ENCODE measurements at regions of chr11 and their contacts with region 1.

Region 1: DNA sequence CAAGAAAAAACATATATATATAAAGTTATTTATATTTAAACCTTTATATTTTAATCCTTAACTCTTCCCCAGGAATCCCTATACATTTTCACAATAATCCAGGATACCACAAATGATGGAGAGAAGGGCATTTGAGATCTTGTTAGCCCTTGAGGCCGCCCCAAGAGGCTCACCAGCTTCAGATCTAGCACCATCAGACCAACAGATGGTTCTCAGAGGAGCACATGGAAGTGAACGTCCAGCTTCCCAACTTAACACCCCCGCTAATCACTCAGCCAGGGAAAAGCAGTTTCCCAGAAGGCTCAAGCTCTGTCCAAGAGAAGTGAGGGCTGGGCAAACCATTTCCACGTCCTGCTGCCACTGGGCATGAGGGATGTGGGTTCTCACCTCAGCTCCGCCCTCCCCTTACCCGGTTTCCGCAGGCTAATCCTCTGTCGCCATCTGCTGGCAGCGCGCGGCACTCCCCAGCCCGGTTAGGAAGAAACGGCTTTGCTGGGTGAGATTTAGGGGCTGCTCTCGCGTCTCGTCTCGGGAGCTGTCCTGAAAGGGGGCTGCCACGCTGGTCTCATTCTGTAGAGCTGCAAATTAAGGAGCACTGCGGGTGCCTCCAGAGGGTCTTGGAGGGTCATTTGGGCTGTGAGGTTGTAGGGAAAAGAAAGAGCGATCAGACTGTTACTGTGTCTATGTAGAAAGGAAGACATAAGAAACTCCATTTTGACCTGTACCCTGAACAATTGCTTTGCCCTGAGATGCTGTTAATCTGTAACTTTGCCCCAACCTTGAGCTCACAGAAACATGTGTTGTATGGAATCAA is 6.8 kb upstream of the FAM111A start:
- DNase-seq: peak; percentile 49
- ATAC-seq: peak; percentile 100
- H3K4me3 ChIP-seq: 0 out of 4 replicates have a peak overlapping the region, but pooled peaks of 1 of the 2 experiments have one; percentile 17
- H3K27ac ChIP-seq: no peak overlapping the region
- H3K4me1 ChIP-seq: peaks cover 0 to 6% of the 10 kb centered on the region in 2 experiments; a peak in 2 of 4 replicates
- H3K27me3 ChIP-seq: no peaks in the 10 kb centered on the region
- CTCF ChIP-seq: peak; percentile 72 to 99 (median 99); a peak in 5 of 6 replicates
- POLR2A ChIP-seq: no peak
- RAD21 ChIP-seq: peak; percentile 90

Region 2: DNA sequence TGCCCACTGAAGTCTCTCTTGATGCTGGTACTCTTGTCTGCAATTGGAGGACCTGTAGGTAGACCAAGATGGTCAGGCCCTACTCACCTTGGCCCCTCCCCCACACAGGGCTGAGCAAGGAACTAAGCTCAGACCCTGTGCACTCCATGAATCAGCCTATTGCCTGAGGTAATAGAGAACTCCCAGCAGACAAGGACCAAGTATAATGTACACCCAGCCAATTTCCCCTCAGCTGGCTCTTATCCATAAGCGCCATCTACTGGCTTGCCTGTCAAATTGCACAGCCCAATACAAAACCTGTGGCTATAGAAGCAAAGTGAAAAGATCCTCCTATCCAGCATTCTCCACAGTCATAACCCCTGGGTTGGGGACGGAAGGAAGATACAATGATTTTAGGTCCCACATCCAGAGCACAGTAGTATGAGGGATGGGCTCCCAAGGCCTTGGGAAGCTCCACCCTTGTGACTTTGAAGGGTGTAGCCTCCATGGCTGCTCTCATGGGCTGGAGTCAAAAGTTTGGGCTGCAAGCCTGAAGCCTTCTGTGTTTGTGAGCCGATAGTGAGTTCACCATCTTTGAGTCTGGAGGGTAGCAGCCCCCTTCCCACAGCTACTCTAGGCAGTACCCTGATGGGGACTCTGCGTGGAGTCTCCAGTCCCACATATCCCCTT is 347.4 kb before region 1 on chr11:
- CTCF ChIA-PET with region 1: no interaction called
- POLR2A ChIA-PET with region 1: no interaction called
- RAD21 ChIA-PET with region 1: no interaction called
- intact Hi-C with region 1: loop called (anchors 5 kb)
- DNase-seq: peak; percentile 34
- ATAC-seq: peak; percentile 98
- H3K4me3 ChIP-seq: no peak overlapping the region
- H3K27ac ChIP-seq: no peak overlapping the region
- H3K4me1 ChIP-seq: peaks cover 0 to 10% of the 10 kb centered on the region in 2 experiments; a peak in 1 of 4 replicates
- H3K27me3 ChIP-seq: no peaks in the 10 kb centered on the region
- CTCF ChIP-seq: peak; percentile 75 to 95 (median 88); a peak in 5 of 6 replicates
- POLR2A ChIP-seq: no peak
- RAD21 ChIP-seq: peak; percentile 91

Region 3: DNA sequence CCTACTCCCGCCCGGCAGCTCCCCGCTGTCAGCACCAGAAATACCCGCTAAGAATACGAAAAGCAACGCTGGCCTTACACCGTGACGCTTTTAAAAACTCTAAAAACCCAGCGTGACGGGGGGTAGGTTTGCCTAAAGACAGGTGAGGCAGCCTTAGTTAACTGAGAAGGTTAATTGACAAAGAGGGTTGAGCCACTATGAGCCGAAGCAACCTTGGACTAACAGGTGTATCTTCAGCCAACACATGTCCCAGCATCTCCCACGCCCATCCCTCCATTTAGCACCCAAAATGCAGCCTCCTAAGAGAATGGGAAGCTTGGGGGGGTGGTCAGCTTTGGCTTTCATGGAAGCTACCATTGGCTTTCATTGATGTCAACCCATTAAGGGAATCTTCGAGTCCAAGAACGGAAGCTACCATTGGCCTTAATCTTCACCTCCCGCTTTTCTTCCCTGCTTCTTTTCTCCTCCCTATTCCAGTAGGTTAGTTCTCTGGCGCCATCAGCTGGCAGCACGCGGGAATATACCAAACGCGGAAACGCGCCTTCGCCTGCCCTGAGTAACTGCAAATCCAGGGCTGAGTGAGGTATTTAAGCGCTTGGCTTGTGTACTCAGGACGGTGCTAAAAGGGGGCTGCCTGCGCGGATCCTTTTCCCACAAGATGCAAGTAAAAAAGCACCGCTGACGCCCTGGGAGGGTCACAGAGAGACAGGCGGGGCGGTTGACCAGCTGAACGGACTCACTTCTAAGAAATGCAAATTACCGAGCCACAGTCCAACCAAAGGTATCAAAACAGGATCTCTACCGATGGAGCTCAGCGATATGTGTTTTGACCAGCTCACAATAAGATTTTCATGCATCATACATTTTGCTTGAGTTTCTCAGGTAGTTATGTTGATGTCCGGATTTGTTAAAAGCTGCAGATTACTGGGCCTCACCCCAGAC is 235.1 kb before region 1 on chr11:
- CTCF ChIA-PET with region 1: interaction called, 5 read pairs
- POLR2A ChIA-PET with region 1: no interaction called
- RAD21 ChIA-PET with region 1: no interaction called
- intact Hi-C with region 1: loop called (anchors 2 kb)
- DNase-seq: peak; percentile 80
- ATAC-seq: peak; percentile 99
- H3K4me3 ChIP-seq: no peak overlapping the region
- H3K27ac ChIP-seq: no peak overlapping the region
- H3K4me1 ChIP-seq: no peaks in the 10 kb centered on the region
- H3K27me3 ChIP-seq: no peaks in the 10 kb centered on the region
- CTCF ChIP-seq: peak; percentile 71 to 79 (median 78); a peak in 5 of 6 replicates
- POLR2A ChIP-seq: no peak
- RAD21 ChIP-seq: peak; percentile 83

Region 4: GRCh38 chr11:59053387-59053786 is 82.5 kb before region 1 on chr11:
- CTCF ChIA-PET with region 1: interaction called, 11 read pairs
- POLR2A ChIA-PET with region 1: no interaction called
- RAD21 ChIA-PET with region 1: interaction called in 1 of 2 experiments, 3 read pairs
- intact Hi-C with region 1: loop called (anchors 5 kb)
- DNase-seq: peak; percentile 40
- ATAC-seq: peak; percentile 74
- H3K4me3 ChIP-seq: no peak overlapping the region
- H3K27ac ChIP-seq: no peak overlapping the region
- H3K4me1 ChIP-seq: peaks cover 0 to 5% of the 10 kb centered on the region in 2 experiments; a peak in 2 of 4 replicates
- H3K27me3 ChIP-seq: 0 out of 2 replicates have a peak, but pooled peaks cover 4% of the 10 kb centered on the region
- CTCF ChIP-seq: peak; percentile 24 to 76 (median 75); a peak in 5 of 6 replicates
- POLR2A ChIP-seq: no peak
- RAD21 ChIP-seq: peak; percentile 22; the same call in 1 of the 2 replicates

Region 5: GRCh38 chr11:59097113-59097708 is 38.6 kb before region 1 on chr11:
- CTCF ChIA-PET with region 1: interaction called, 4 read pairs
- POLR2A ChIA-PET with region 1: no interaction called
- RAD21 ChIA-PET with region 1: no interaction called
- intact Hi-C with region 1: loop called (anchors 1 kb)
- DNase-seq: peak; percentile 48
- ATAC-seq: peak; percentile 84
- H3K4me3 ChIP-seq: no peak overlapping the region
- H3K27ac ChIP-seq: no peak overlapping the region
- H3K4me1 ChIP-seq: no peaks in the 10 kb centered on the region
- H3K27me3 ChIP-seq: no peaks in the 10 kb centered on the region
- CTCF ChIP-seq: peak; percentile 37 to 74 (median 65); a peak in 5 of 6 replicates
- POLR2A ChIP-seq: no peak
- RAD21 ChIP-seq: peak; percentile 44